Spleen (tissue), 13 donors: ENCODE measurements at regions of chr11 and their contacts with region 1.

Region 1: GRCh38 chr11:100855466-100856067 is 168.5 kb downstream of the ARHGAP42 start:
- DNase-seq: no peak
- H3K4me3 ChIP-seq: no peak overlapping the region
- H3K27ac ChIP-seq: no peak overlapping the region
- H3K4me1 ChIP-seq: peaks cover 0 to 9% (median 0%) of the 10 kb centered on the region in 6 donors
- H3K27me3 ChIP-seq: no peaks in the 10 kb centered on the region
- CTCF ChIP-seq: peak; percentile 26 to 72 (median 63)
- POLR2A ChIP-seq: no peak

Region 2: DNA sequence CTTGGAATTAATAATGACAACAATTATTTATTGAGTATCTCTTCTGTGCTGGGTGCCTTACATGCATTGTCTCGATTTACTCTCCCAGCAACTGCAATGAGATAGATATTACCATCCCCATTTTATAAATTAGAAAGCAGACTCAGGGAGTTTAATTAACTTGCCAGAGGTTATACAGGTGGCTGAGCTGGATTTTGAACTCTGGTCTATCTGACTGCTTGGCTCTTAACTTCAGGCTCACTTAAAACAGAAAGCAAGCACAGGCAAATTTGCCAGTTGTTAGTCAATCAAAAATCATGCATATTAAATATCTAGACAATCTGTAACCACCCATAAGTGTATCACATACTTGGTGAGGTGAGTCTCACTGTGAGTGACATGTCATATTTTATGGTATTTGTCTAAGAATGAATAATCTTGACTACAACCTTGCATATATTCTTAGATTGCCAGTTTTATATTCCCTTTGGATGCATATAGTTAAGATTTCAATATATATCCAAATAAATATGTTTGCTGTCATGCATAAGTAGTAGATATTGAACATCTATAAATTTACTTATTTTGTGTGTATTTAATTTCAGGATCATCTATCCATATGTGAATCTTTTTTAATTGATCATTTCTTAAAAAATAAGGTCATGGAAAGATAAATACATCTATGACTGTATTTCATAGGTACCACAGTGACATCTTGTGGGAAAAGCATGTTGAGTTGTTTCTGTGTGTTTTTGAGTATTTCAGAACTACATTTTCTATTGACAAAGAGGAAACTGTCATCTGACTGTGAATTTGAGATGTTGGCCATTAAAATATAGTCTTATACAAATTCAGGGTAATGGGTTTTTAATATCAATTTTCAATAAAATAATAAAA is 280.4 kb before region 1 on chr11:
- intact Hi-C with region 1: loop called (anchors 5 kb)
- DNase-seq: no peak
- H3K4me3 ChIP-seq: no peak overlapping the region
- H3K27ac ChIP-seq: no peak overlapping the region
- H3K4me1 ChIP-seq: peaks cover 0 to 12% (median 1%) of the 10 kb centered on the region in 6 donors
- H3K27me3 ChIP-seq: no peaks in the 10 kb centered on the region
- CTCF ChIP-seq: peak in 1 of 11 experiments; percentile 10
- POLR2A ChIP-seq: no peak

Region 3: GRCh38 chr11:100687630-100688395 is 167.8 kb before region 1 on chr11:
- intact Hi-C with region 1: loop called (anchors 10 kb)
- DNase-seq: peak; percentile 80
- H3K4me3 ChIP-seq: peak overlapping the region; percentile 22 to 86 (median 60)
- H3K27ac ChIP-seq: peak overlapping the region; percentile 45 to 89 (median 84)
- H3K4me1 ChIP-seq: peaks cover 0 to 68% (median 31%) of the 10 kb centered on the region in 6 donors
- H3K27me3 ChIP-seq: peaks cover 0 to 16% (median 0%) of the 10 kb centered on the region in 7 donors
- CTCF ChIP-seq: peak in 10 of 11 experiments; percentile 26 to 66 (median 52)
- POLR2A ChIP-seq: no peak

Region 4: DNA sequence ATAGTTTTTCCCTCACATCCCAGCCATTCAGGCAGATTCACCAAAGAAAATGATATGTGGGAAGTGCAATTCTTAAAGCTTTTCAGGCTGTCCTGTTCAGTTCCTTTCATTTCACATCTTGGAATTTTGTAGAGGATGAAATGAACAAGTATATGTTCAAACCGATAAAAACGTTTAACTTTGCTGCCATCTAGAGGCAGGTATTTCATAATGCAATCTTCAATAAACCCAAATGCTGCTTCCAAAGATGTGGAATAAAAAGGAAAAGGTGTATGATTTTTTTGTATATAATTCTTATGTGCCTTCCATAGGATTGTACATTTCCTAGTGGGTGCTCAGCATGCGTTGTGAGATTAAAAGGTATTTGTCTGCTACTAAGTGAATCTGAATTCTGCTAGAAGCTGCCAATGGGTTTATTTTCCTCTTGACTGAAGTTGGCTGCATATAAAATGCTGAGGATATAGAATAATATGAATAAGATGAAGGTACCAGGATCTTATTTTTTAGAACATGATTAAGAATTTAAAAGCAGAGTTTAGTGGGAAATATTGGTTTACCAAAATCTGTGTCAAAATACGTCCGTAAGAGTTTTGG is 74.7 kb after region 1 on chr11:
- intact Hi-C with region 1: loop called (anchors 10 kb)
- DNase-seq: no peak
- H3K4me3 ChIP-seq: no peak overlapping the region
- H3K27ac ChIP-seq: no peak overlapping the region
- H3K4me1 ChIP-seq: peaks cover 0 to 11% (median 0%) of the 10 kb centered on the region in 6 donors
- H3K27me3 ChIP-seq: no peaks in the 10 kb centered on the region
- CTCF ChIP-seq: peak in 9 of 11 experiments; percentile 27 to 70 (median 61)
- POLR2A ChIP-seq: no peak